CD4-positive, alpha-beta T cell (primary cell): ENCODE measurements at regions of chr10 and their contacts with region 1.

Region 1: DNA sequence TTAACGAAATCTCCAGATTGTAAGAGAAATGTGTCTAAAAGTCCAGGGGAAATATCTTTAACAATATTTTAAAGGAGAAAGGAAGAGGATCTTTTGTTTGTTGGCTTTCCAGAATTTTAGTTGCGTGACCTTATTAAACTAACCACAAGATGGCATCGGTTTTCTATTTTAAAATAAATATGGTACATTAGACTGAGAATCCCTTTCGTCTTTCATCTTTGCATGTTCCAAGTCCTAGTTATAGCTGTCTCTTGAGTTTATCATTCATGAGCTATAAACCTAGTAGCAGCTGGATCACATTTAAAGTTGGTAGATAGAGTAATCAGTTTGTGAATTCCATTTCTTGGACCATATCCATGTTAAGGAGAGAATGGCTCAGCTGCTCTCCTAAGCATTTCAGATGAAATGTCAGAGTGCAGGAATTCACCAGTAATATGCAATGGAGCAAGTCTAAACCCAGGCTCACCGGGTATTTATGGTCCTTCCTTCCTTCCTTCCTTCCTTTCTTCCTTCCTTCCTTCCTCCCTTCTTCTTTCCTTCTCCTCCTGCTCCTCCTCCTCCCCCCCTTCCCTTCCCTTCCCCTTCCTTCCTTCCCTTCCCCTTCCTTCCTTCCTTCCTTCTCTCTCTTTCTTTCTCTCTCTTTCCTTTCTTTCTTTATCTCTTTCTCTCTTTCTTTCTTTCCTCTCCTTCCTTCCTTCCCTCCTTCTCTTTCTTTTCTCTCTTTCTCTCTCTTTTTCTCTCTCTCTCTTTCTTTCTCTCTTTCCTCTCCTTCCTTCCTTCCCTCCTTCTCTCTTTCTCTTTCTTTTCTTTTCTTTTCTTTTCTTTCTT is 57.8 kb upstream of the RAB18 start:
- DNase-seq: peak in 3 of 14 experiments; percentile 53 to 57 (median 55)
- ATAC-seq: peak; percentile 52
- H3K4me3 ChIP-seq: no peak overlapping the region
- H3K4me3 Mint-ChIP-seq: no peak overlapping the region
- H3K27ac ChIP-seq: no peak overlapping the region
- H3K27ac Mint-ChIP-seq: no peak overlapping the region
- H3K4me1 ChIP-seq: peaks cover 3% of the 10 kb centered on the region
- H3K4me1 Mint-ChIP-seq: peaks cover 17% of the 10 kb centered on the region
- H3K27me3 ChIP-seq: no peaks in the 10 kb centered on the region
- H3K27me3 Mint-ChIP-seq: no peaks in the 10 kb centered on the region
- CTCF ChIP-seq: peak; percentile 67

Region 2: DNA sequence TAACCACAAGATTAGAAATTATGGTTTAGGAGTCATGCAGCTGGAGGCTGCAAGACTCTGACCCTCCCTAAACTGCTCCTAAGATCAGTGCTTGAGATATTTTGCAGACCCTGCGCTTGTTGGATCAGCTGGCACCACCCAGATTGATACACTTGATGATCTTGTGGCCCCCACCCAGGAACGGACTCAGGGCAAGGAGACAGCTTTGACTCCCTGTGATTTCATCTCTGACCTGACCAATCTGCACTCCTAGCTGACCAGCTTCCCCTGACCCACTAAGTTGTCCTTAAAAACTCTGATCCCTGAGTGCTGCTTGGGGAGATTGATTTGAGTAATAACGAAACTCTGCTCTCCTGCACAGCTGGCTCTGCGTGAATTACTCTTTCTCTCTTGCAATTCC is 49.8 kb after region 1 on chr10:
- CTCF ChIA-PET with region 1: no interaction called
- POLR2A ChIA-PET with region 1: no interaction called
- intact Hi-C with region 1: loop called (anchors 5 to 10 kb)
- DNase-seq: no peak
- ATAC-seq: no peak
- H3K4me3 ChIP-seq: no peak overlapping the region
- H3K4me3 Mint-ChIP-seq: no peak overlapping the region
- H3K27ac ChIP-seq: no peak overlapping the region
- H3K27ac Mint-ChIP-seq: no peak overlapping the region
- H3K4me1 ChIP-seq: no peaks in the 10 kb centered on the region
- H3K4me1 Mint-ChIP-seq: no peaks in the 10 kb centered on the region
- H3K27me3 ChIP-seq: no peaks in the 10 kb centered on the region
- H3K27me3 Mint-ChIP-seq: peaks cover 11% of the 10 kb centered on the region
- CTCF ChIP-seq: no peak

Region 3: DNA sequence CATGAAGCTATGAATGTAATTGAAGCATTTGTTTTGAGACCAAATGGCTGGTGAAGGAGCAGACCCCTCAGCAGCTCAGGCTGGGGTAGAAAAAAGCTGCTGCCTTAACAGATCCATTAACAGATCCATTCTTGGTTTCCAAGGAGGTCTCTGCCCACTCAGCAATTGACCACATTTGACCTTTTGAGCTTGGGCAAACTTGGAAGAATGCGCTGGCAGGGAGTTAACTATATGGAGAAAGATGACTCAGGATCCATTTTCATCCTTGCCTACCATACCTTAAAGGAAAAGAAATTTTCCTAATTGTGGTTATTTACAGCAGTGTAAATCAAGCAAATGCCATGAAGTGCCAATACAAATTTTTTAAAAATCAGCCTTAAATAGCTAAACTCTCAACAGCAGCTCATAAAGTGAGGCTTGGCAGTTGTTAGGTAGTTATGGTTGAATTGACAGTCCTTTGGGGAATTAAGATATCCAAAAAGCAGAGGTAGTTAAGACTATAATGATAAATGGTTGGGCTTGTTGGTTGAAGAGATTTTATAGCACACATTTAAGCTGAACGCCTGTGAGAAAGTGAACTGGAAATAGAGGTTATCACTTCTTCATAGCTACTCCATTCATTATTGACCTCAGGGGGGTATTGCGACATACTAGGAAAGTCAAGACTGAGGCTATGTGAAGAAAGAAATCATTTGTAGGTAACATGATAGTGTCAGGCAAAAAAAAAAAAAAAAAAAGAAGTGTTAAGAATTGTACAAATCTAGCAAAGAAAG is 215.4 kb after region 1 on chr10:
- CTCF ChIA-PET with region 1: interaction called, 5 read pairs
- POLR2A ChIA-PET with region 1: no interaction called
- intact Hi-C with region 1: loop called (anchors 1 kb)
- DNase-seq: no peak
- ATAC-seq: no peak
- H3K4me3 ChIP-seq: no peak overlapping the region
- H3K4me3 Mint-ChIP-seq: no peak overlapping the region
- H3K27ac ChIP-seq: no peak overlapping the region
- H3K27ac Mint-ChIP-seq: no peak overlapping the region
- H3K4me1 ChIP-seq: no peaks in the 10 kb centered on the region
- H3K4me1 Mint-ChIP-seq: no peaks in the 10 kb centered on the region
- H3K27me3 ChIP-seq: peaks cover 3 to 24% of the 10 kb centered on the region in 2 experiments
- H3K27me3 Mint-ChIP-seq: peaks cover 45% of the 10 kb centered on the region
- CTCF ChIP-seq: no peak

Region 4: DNA sequence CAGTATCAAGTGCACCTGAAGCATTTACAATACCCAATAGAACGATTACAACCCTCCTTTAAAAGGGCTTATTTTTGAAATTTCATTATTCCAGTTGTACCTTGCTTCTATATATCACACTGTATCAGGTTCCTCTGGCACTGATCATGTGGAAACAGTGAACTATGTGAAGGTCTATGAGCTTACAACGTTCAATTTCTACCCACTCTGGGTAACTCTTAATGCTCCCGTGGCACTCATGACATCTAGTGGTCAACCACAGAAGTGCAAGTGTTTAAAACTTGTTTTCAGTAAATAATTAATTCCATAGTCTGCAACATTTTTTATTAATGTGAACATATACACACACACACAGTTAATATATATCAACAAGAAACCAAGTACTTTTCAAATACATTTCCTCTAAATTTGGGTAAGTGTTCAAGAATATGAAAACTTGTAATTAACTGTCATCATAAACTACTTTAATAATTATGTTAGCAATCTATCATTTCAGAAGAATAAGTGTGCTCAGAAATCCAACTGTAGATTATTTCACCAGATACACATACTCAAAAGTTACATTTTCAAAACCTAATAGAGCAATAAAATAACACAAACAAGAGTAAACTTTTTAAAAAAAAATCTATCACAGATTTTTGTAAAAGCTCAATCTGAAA is 795.6 kb after region 1 on chr10:
- CTCF ChIA-PET with region 1: no interaction called
- POLR2A ChIA-PET with region 1: no interaction called
- intact Hi-C with region 1: loop called in 1 of 2 experiments (anchors 5 kb)
- DNase-seq: peak in 8 of 14 experiments; percentile 7 to 74 (median 36)
- ATAC-seq: peak; percentile 78
- H3K4me3 ChIP-seq: no peak overlapping the region
- H3K4me3 Mint-ChIP-seq: no peak overlapping the region
- H3K27ac ChIP-seq: no peak overlapping the region
- H3K27ac Mint-ChIP-seq: no peak overlapping the region
- H3K4me1 ChIP-seq: peaks cover 3% of the 10 kb centered on the region
- H3K4me1 Mint-ChIP-seq: peaks cover 45% of the 10 kb centered on the region
- H3K27me3 ChIP-seq: no peaks in the 10 kb centered on the region
- H3K27me3 Mint-ChIP-seq: no peaks in the 10 kb centered on the region
- CTCF ChIP-seq: peak; percentile 98

Region 5: DNA sequence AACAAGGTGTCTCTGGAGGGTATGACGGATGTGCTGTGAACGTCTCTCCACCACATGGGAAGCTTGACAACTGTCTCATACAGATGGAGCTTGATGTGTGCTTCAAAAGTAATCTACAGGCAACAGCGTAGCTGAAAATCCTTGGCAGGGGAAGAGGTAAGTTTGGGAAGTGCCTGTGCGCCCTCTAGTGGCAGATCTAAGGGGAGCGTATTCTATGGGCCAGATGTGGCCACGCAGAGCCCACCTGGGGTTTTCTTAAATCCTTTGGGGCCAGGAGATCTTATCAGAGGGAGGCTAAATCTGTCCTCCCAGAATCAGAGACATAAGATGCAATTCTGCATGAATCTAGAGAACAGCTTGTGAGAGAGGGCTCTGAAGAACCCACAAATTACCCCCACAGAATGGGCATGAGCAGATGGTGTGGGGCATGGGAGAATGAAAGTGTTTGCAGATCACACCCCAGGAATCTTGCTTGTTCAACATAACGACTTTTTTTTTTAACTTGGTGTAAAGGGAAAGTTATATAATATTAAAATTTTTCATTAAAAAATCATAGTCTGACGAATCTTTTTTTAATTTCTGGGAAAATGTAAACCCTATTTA is 947.8 kb after region 1 on chr10:
- CTCF ChIA-PET with region 1: no interaction called
- POLR2A ChIA-PET with region 1: no interaction called
- intact Hi-C with region 1: loop called (anchors 5 kb)
- DNase-seq: peak; percentile 45 to 85 (median 54)
- ATAC-seq: peak; percentile 80
- H3K4me3 ChIP-seq: no peak overlapping the region
- H3K4me3 Mint-ChIP-seq: no peak overlapping the region
- H3K27ac ChIP-seq: no peak overlapping the region
- H3K27ac Mint-ChIP-seq: no peak overlapping the region
- H3K4me1 ChIP-seq: peaks cover 5% of the 10 kb centered on the region
- H3K4me1 Mint-ChIP-seq: peaks cover 6% of the 10 kb centered on the region
- H3K27me3 ChIP-seq: no peaks in the 10 kb centered on the region
- H3K27me3 Mint-ChIP-seq: peaks cover 6% of the 10 kb centered on the region
- CTCF ChIP-seq: peak; percentile 91